IMR-90 (cell line): ENCODE measurements at regions of chr7 and their contacts with region 1.

Region 1: DNA sequence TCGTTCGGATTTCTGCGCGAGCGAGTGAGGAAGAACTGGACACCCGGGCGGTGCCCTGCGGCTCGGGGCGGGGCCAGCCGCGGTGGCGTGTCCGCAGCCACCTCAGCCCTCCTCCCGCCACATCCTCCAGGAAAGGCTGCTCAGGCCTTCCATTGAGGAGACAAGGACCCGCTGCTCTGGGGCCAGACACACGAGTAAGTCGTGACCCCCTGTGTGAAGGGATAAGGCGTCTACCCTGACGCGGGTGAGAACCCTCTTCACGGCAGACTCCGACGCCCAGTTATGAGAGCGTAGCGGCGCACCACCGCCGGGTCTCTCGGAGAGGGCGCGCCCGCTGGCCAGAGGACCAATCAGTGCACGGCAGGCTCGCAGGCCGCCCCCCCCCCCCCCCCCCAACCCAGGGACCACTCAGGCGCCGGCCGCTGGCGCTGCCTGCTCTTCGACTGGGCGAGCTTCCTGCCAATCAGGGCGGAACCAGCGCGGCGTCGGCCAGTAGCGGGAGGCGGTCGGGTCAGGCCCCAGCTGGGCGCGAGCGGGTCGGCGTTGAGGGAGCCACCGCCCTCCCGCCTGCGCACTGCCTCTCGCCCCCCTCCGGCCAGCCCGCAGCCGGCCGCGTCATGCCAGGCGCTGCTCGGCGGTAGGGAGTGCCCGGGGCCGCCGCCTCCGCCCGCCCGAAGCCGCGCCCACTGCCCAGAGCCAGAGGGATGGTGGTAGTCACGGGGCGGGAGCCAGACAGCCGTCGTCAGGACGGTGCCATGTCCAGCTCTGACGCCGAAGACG is at the start of gene KCTD7:
- DNase-seq: peak; percentile 98
- ATAC-seq: peak; percentile 91
- H3K4me3 ChIP-seq: peak within 1 kb of the TSS; percentile 73
- H3K27ac ChIP-seq: peak within 1 kb of the TSS; percentile 95
- H3K4me1 ChIP-seq: peaks cover 6% of the 10 kb centered on the region
- H3K27me3 ChIP-seq: no peaks in the 10 kb centered on the region
- CTCF ChIP-seq: no peak
- POLR2A ChIP-seq: peak; percentile 97
- RAD21 ChIP-seq: no peak
- total RNA-seq, gene KCTD7: 6.1 TPM in 2 replicates

Region 2: DNA sequence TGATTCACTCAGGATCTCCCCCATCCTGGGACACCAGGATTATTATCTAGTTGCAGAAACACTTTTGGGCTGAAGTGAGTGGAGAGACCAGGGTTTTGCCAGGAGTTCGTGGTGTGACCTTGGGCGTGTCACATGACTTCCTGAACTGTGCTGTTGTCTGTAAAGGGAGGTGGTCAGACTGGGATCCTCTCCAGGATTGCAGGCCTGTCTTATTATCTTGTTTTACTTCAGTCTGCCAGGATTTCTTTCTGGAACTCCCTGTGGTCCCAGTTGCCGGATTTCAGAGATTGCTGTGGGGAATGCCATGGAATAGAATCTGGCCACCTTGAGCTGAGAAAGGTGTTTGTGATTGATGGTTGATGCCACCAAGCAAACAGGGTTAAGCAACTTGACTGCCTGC is 478.1 kb before region 1 on chr7:
- CTCF ChIA-PET with region 1: no interaction called
- POLR2A ChIA-PET with region 1: no interaction called
- dilution Hi-C with region 1: no loop called
- in situ Hi-C with region 1: no loop called
- intact Hi-C with region 1: loop called (anchors 5 kb)
- DNase-seq: peak; percentile 76
- ATAC-seq: peak; percentile 5; the same call in 1 of the 2 replicates
- H3K4me3 ChIP-seq: no peak overlapping the region
- H3K27ac ChIP-seq: peak overlapping the region; percentile 68; the same call in 1 of the 2 replicates
- H3K4me1 ChIP-seq: peaks cover 35% of the 10 kb centered on the region
- H3K27me3 ChIP-seq: no peaks in the 10 kb centered on the region
- CTCF ChIP-seq: no peak
- POLR2A ChIP-seq: no peak
- RAD21 ChIP-seq: no peak

Region 3: GRCh38 chr7:66591799-66592596 is 36.6 kb before region 1 on chr7:
- CTCF ChIA-PET with region 1: no interaction called
- POLR2A ChIA-PET with region 1: interaction called, 5 read pairs
- dilution Hi-C with region 1: no loop called
- in situ Hi-C with region 1: no loop called
- intact Hi-C with region 1: loop called (anchors 1 kb)
- DNase-seq: peak; percentile 90
- ATAC-seq: peak; percentile 89
- H3K4me3 ChIP-seq: peak overlapping the region; percentile 76
- H3K27ac ChIP-seq: peak overlapping the region; percentile 96
- H3K4me1 ChIP-seq: peaks cover 4% of the 10 kb centered on the region; the same call in 1 of the 2 replicates
- H3K27me3 ChIP-seq: no peaks in the 10 kb centered on the region
- CTCF ChIP-seq: no peak
- POLR2A ChIP-seq: peak; percentile 96
- RAD21 ChIP-seq: no peak

Region 4: DNA sequence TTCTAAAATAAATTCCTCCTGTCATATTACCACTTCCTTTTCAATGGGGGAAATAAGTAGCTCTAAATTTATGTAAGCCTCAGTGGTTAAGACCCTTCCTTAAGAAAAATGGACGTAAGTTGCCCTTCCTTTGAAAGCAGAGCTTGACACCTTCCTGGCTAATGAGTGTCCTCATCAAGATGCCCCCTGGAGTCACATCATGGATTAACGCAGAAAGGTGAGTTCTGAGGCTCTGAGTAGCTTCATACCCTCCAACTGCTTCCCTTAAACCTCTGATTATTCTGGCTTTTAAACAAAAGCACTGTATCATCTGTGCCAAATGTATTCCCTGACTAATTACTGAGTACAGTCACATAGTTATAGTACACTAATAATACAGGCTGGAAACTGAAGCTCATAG is 14.8 kb after region 1 on chr7:
- CTCF ChIA-PET with region 1: interaction called, 4 read pairs
- POLR2A ChIA-PET with region 1: interaction called, 13 read pairs
- dilution Hi-C with region 1: no loop called
- in situ Hi-C with region 1: no loop called
- intact Hi-C with region 1: no loop called
- DNase-seq: no peak
- ATAC-seq: no peak
- H3K4me3 ChIP-seq: no peak overlapping the region
- H3K27ac ChIP-seq: no peak overlapping the region
- H3K4me1 ChIP-seq: no peaks in the 10 kb centered on the region
- H3K27me3 ChIP-seq: no peaks in the 10 kb centered on the region
- CTCF ChIP-seq: no peak
- POLR2A ChIP-seq: no peak
- RAD21 ChIP-seq: no peak